CD8-positive, alpha-beta T cell (primary cell): ENCODE measurements at regions of chr12 and their contacts with region 1.

Region 1: GRCh38 chr12:8108808-8109398 is 14.5 kb upstream of the CLEC4A start:
- DNase-seq: peak; percentile 54 to 84 (median 79)
- ATAC-seq: peak; percentile 87
- H3K4me3 ChIP-seq: no peak overlapping the region
- H3K4me3 Mint-ChIP-seq: no peak overlapping the region
- H3K27ac ChIP-seq: no peak overlapping the region
- H3K27ac Mint-ChIP-seq: no peak overlapping the region
- H3K4me1 ChIP-seq: no peaks in the 10 kb centered on the region
- H3K4me1 Mint-ChIP-seq: peaks cover 5% of the 10 kb centered on the region
- H3K27me3 ChIP-seq: no peaks in the 10 kb centered on the region
- H3K27me3 Mint-ChIP-seq: no peaks in the 10 kb centered on the region
- CTCF ChIP-seq: peak; percentile 99

Region 2: GRCh38 chr12:7748852-7749251 is 360.1 kb before region 1 on chr12:
- CTCF ChIA-PET with region 1: no interaction called
- POLR2A ChIA-PET with region 1: no interaction called
- intact Hi-C with region 1: no loop called
- DNase-seq: no peak
- ATAC-seq: no peak
- H3K4me3 ChIP-seq: no peak overlapping the region
- H3K4me3 Mint-ChIP-seq: no peak overlapping the region
- H3K27ac ChIP-seq: no peak overlapping the region
- H3K27ac Mint-ChIP-seq: no peak overlapping the region
- H3K4me1 ChIP-seq: no peaks in the 10 kb centered on the region
- H3K4me1 Mint-ChIP-seq: peaks cover 3% of the 10 kb centered on the region
- H3K27me3 ChIP-seq: no peaks in the 10 kb centered on the region
- H3K27me3 Mint-ChIP-seq: no peaks in the 10 kb centered on the region
- CTCF ChIP-seq: no peak

Region 3: DNA sequence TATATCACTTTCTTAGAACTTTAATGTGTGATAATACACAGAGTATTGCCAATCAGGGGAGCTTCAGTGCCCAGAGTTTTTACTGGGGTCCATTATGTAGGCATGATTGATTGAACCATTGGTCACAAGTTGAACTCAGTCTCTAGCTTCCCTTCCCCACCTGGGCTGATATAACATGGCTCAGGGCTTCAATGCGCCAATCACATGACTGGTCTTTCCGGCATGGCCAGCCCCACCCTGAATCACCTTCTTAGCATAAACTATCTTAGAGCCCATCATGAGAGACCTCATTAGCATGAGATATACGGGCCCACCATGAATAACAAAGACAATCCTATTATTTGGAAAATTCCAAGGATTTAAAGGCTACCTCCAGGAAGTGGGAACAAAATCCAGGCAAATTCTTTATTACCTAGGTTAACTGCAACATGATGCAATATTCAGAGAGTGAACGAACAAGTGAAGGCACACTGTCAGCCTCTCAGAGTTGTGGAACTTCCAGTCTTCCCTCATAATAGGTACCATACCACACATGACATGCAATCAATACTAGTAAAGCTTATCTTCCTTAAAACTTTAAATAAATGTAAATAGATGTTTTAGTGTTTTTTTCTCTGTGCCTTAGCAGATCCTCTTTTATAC is 11.3 kb after region 1 on chr12:
- CTCF ChIA-PET with region 1: interaction called, 19 read pairs
- POLR2A ChIA-PET with region 1: no interaction called
- intact Hi-C with region 1: no loop called
- DNase-seq: no peak
- ATAC-seq: no peak
- H3K4me3 ChIP-seq: no peak overlapping the region
- H3K4me3 Mint-ChIP-seq: no peak overlapping the region
- H3K27ac ChIP-seq: no peak overlapping the region
- H3K27ac Mint-ChIP-seq: no peak overlapping the region
- H3K4me1 ChIP-seq: no peaks in the 10 kb centered on the region
- H3K4me1 Mint-ChIP-seq: no peaks in the 10 kb centered on the region
- H3K27me3 ChIP-seq: no peaks in the 10 kb centered on the region
- H3K27me3 Mint-ChIP-seq: no peaks in the 10 kb centered on the region
- CTCF ChIP-seq: no peak

Region 4: GRCh38 chr12:8226355-8226754 is 117.5 kb after region 1 on chr12:
- CTCF ChIA-PET with region 1: interaction called, 20 read pairs
- POLR2A ChIA-PET with region 1: no interaction called
- intact Hi-C with region 1: no loop called
- DNase-seq: peak in 1 of 9 experiments; percentile 36
- ATAC-seq: no peak
- H3K4me3 ChIP-seq: no peak overlapping the region
- H3K4me3 Mint-ChIP-seq: no peak overlapping the region
- H3K27ac ChIP-seq: no peak overlapping the region
- H3K27ac Mint-ChIP-seq: no peak overlapping the region
- H3K4me1 ChIP-seq: no peaks in the 10 kb centered on the region
- H3K4me1 Mint-ChIP-seq: no peaks in the 10 kb centered on the region
- H3K27me3 ChIP-seq: no peaks in the 10 kb centered on the region
- H3K27me3 Mint-ChIP-seq: peaks cover 13% of the 10 kb centered on the region
- CTCF ChIP-seq: no peak